Mammary epithelial cell (primary cell): ENCODE measurements at regions of chrX and their contacts with region 1.

Region 1: GRCh38 chrX:106894392-106894909 is 8.7 kb downstream of the RIPPLY1 start:
- DNase-seq: peak; percentile 63
- H3K4me3 ChIP-seq: no peak overlapping the region
- H3K27ac ChIP-seq: no peak overlapping the region
- H3K4me1 ChIP-seq: peaks cover 19% of the 10 kb centered on the region
- H3K27me3 ChIP-seq: peaks cover 2% of the 10 kb centered on the region
- CTCF ChIP-seq: peak; percentile 93 to 96

Region 2: GRCh38 chrX:106959901-106960300 is 65.5 kb after region 1 on chrX:
- CTCF ChIA-PET with region 1: no interaction called
- dilution Hi-C with region 1: no loop called
- in situ Hi-C with region 1: loop called in 1 of 2 experiments (anchors 10 kb)
- intact Hi-C with region 1: loop called (anchors 2 kb)
- DNase-seq: peak; percentile 7
- H3K4me3 ChIP-seq: no peak overlapping the region
- H3K27ac ChIP-seq: no peak overlapping the region
- H3K4me1 ChIP-seq: no peaks in the 10 kb centered on the region
- H3K27me3 ChIP-seq: no peaks in the 10 kb centered on the region
- CTCF ChIP-seq: peak in 1 of 2 donors; percentile 37

Region 3: GRCh38 chrX:107118322-107119147 is 224.1 kb after region 1 on chrX and contains the start of gene RBM41:
- CTCF ChIA-PET with region 1: no interaction called
- dilution Hi-C with region 1: no loop called
- in situ Hi-C with region 1: no loop called
- intact Hi-C with region 1: loop called (anchors 10 kb)
- DNase-seq: peak; percentile 74
- H3K4me3 ChIP-seq: peak within 1 kb of the TSS; percentile 45 to 58 (median 51)
- H3K27ac ChIP-seq: peak within 1 kb of the TSS; percentile 57
- H3K4me1 ChIP-seq: peaks cover 9% of the 10 kb centered on the region
- H3K27me3 ChIP-seq: no peaks in the 10 kb centered on the region
- CTCF ChIP-seq: no peak
- total RNA-seq, gene RBM41: 21.5 TPM

Region 4: GRCh38 chrX:107627838-107628661 is 733.6 kb after region 1 on chrX and contains the start of gene PRPS1:
- CTCF ChIA-PET with region 1: no interaction called
- dilution Hi-C with region 1: no loop called
- in situ Hi-C with region 1: no loop called
- intact Hi-C with region 1: loop called (anchors 2 kb)
- DNase-seq: peak; percentile 90
- H3K4me3 ChIP-seq: peak within 1 kb of the TSS; percentile 48 to 66 (median 66)
- H3K27ac ChIP-seq: peak within 1 kb of the TSS; percentile 56
- H3K4me1 ChIP-seq: no peaks in the 10 kb centered on the region
- H3K27me3 ChIP-seq: peaks cover 2% of the 10 kb centered on the region
- CTCF ChIP-seq: no peak
- total RNA-seq, gene PRPS1: 23.2 to 34.1 TPM

Region 5: DNA sequence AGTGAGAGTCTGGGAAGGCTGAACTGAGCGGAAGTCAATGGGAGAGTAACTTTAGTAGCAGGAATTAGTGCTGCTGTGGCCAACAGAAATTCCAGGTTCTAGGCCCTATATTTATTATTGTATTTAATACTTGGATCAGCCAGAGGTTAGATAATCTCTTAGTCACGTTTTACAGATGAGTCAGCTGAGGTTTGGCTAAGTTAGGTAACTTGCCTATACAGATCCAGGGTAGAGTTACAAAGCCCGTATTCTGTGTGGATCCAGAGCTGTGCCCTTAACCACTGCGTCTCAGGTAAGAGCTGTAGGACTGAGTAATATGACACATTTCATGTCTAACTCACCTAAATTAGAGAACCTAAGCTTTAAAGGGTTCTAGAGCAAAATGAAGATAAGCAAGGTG is 1176.4 kb after region 1 on chrX:
- CTCF ChIA-PET with region 1: no interaction called
- dilution Hi-C with region 1: no loop called
- in situ Hi-C with region 1: no loop called
- intact Hi-C with region 1: loop called (anchors 10 kb)
- DNase-seq: peak; percentile 89
- H3K4me3 ChIP-seq: no peak overlapping the region
- H3K27ac ChIP-seq: peak overlapping the region; percentile 39
- H3K4me1 ChIP-seq: peaks cover 24% of the 10 kb centered on the region
- H3K27me3 ChIP-seq: no peaks in the 10 kb centered on the region
- CTCF ChIP-seq: no peak